ENCODE measurements at regions of chr2 and their contacts with region 1.

Region 1: GRCh38 chr2:235754352-235755207 is 260.7 kb downstream of the AGAP1 start:
- DNase-seq: no peak
- H3K4me3 ChIP-seq: no peak overlapping the region
- H3K27me3 ChIP-seq: no peaks in the 10 kb centered on the region
- CTCF ChIP-seq: no peak

Region 2: GRCh38 chr2:235148201-235149170 is 606.1 kb before region 1 on chr2:
- CTCF ChIA-PET with region 1: no interaction called
- POLR2A ChIA-PET with region 1: no interaction called
- DNase-seq: no peak
- H3K4me3 ChIP-seq: no peak overlapping the region
- H3K27me3 ChIP-seq: peaks cover 13% of the 10 kb centered on the region
- CTCF ChIP-seq: no peak

Region 3: DNA sequence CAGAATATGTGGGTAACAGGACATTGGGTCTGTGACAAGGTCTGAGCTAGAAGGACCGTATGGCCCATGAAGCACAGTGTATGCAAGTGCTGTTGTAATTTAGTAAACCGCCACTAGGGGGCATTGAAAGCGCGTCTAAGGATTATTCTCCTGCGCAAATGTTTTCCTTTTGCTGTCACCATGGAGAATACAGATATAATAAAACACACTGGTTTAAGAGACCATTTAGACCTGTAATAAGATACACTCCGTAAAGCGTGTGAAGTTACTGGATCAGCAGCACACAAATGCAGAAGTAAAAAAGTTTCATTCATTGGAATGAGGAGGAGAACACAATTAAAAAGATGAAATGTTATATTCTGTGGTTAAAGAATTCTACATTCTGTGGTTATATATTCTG is 11.7 kb after region 1 on chr2:
- CTCF ChIA-PET with region 1: interaction called, 16 read pairs
- POLR2A ChIA-PET with region 1: no interaction called
- DNase-seq: peak; percentile 57
- H3K4me3 ChIP-seq: no peak overlapping the region
- H3K27me3 ChIP-seq: no peaks in the 10 kb centered on the region
- CTCF ChIP-seq: peak; percentile 82